Cardiac septum (tissue), 1 donor: ENCODE measurements at regions of chr3 and their contacts with region 1.

Region 1: DNA sequence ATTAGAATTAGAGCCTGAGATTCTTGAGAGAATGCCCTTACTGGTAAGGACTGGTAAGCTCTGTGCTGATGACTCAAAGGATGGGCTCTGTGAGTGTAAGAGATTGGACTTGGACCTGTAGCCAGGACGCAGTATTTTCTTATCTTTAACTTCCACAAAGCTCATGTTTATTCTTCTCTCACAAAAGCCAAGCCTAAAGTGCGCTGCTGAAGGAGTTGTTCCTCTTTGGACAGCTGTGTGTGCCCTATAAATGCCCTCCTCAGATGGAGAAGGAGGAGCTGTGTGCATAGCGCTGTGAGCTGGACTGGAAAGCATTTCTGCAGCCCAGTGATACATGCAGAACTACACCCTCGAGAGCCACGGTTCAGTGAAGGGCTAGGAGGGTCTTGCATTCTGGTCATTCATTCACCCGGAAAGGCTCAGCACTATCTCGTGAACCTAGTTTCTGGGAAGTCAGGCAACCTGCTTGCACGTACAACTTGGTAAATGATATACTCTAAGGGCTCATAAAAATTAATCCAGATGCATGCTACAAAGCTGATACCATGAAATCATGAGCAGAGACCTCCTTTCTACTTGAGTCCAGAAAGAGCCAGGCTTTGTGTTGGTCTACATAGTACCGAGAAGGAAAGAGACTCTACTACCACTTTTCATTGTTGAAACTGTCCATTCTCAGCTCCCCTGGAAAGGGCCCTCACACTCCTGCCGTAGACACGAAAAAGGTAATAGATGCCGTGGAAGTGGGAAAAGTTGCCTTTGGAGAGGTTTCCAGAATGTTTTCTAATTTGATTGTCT is 103.0 kb upstream of the TBL1XR1 start:
- DNase-seq: no peak

Region 2: DNA sequence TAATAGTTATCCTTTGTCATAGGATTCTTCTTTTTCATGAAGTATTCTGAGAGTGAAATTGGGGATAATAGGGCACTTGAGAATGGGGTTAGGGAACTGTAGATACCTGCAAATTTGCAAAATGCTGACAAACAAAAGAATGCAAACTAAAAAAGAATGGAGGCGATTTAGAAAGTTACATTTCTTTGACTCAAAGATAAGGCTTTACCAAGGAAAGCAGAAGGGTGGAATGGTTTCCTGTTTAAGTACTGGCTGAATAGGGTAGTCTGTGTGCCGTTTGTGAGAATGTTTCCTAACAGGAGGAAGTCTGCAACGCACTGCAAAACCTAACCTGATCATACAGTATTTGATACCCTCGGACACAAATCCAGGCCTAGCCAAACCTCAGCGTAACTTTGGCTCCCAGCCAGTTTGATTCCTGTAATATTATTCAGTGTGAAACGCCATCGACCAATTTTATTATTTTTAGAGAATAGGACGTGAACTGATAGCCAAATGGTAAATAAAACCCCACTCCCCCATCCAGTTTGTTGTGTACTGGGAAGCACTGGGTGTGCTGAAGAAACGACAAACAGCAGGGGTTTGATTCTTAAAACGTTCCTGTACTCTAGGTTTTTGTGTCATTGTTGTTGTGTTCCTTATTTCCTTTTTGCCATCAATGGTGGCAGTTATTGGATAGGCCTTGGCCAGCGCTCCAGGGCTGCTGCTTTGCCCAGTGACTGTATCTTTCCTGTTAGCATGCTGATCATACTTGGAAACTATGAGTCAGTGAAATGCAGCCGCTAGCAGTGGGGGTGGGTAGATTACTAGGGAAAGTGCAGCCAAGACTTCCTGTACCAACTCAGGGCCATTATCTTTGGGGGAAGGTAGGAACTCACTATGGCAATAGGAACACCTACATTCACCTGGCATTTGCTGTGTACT is 45.1 kb after region 1 on chr3:
- intact Hi-C with region 1: loop called (anchors 2 kb)
- DNase-seq: peak; percentile 90